Prostate gland (tissue), 2 donors: ENCODE measurements at regions of chr4 and their contacts with region 1.

Region 1: DNA sequence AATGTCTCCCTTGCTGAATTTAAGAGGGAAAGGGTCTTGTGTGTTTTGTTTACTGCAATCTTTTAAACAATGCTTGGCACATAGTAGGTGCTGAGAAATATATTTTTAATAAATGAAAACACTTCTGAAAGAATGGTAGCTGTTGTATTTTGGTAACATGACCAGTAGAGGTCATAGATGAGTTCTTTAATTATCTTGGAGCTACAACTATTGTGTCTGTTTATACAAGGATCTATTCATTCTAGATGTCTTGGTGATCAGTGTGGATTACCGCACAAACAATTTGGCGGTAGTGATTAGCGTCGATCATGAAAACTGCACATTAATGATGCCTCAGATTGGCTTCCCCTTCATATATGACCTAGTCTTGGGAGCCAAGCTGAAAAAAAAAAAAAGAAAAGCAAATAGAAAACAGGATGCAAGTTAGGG is 21.4 kb upstream of the SCRG1 start:
- DNase-seq: no peak
- H3K4me3 ChIP-seq: no peak overlapping the region
- H3K27ac ChIP-seq: no peak overlapping the region
- H3K4me1 ChIP-seq: no peaks in the 10 kb centered on the region
- H3K27me3 ChIP-seq: no peaks in the 10 kb centered on the region
- CTCF ChIP-seq: peak in 3 of 4 experiments; percentile 49 to 58 (median 51)
- POLR2A ChIP-seq: no peak

Region 2: GRCh38 chr4:173318648-173319211 is 101.6 kb before region 1 on chr4:
- intact Hi-C with region 1: loop called (anchors 2 kb)
- DNase-seq: no peak
- H3K4me3 ChIP-seq: no peak overlapping the region
- H3K27ac ChIP-seq: no peak overlapping the region
- H3K4me1 ChIP-seq: no peaks in the 10 kb centered on the region
- H3K27me3 ChIP-seq: no peaks in the 10 kb centered on the region
- CTCF ChIP-seq: peak; percentile 16 to 56 (median 40)
- POLR2A ChIP-seq: no peak

Region 3: GRCh38 chr4:173494013-173494970 is 74.0 kb after region 1 on chr4:
- intact Hi-C with region 1: loop called (anchors 5 kb)
- DNase-seq: peak; percentile 47
- H3K4me3 ChIP-seq: peak overlapping the region; percentile 1 to 16
- H3K27ac ChIP-seq: no peak overlapping the region
- H3K4me1 ChIP-seq: no peaks in the 10 kb centered on the region
- H3K27me3 ChIP-seq: no peaks in the 10 kb centered on the region
- CTCF ChIP-seq: peak in 3 of 4 experiments; percentile 58 to 64 (median 59)
- POLR2A ChIP-seq: no peak

Region 4: DNA sequence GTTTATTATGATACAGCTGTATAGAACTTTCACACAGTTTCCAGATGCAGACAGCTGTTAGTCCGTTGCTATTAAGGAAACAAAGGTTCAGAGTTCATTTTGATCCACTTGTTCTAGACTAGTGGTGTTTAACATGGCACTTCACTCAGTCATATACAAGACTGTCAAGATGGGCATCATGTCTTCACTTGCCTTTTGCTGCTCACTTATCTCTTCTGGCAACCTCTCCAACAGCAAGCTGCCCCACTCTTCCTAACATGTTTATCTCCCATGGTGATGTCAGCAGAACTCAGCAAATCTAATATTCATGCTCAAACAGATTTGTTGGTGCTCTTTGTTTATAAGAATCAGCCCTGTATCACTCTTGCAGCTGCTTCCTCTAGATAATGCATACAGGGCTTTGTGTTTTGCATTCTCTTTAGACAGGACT is 345.8 kb after region 1 on chr4:
- intact Hi-C with region 1: no loop called
- DNase-seq: no peak
- H3K4me3 ChIP-seq: no peak overlapping the region
- H3K27ac ChIP-seq: no peak overlapping the region
- H3K4me1 ChIP-seq: no peaks in the 10 kb centered on the region
- H3K27me3 ChIP-seq: no peaks in the 10 kb centered on the region
- CTCF ChIP-seq: no peak
- POLR2A ChIP-seq: no peak